GM10248 (cell line): ENCODE measurements at regions of chr1 and their contacts with region 1.

Region 1: DNA sequence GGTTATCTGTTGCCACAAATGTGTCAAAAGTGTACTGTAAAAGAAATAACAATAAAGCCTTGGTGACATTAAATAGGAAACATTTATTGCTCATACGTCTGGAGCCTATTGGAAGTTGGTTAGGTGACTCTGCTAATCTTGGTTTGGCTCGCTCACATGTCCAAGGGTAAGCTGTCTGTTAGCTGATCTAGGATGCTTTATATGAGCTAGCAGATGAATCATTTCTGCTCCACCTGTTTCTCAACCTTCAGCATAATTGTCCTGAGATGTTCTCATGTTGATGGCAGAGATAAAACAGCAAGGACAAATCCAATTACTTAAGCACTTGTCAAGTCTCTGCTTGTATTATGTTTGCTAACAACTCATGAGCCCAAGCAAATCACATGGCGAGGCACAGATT is 56.0 kb upstream of the CD53 start:
- DNase-seq: no peak
- CTCF ChIP-seq: no peak

Region 2: DNA sequence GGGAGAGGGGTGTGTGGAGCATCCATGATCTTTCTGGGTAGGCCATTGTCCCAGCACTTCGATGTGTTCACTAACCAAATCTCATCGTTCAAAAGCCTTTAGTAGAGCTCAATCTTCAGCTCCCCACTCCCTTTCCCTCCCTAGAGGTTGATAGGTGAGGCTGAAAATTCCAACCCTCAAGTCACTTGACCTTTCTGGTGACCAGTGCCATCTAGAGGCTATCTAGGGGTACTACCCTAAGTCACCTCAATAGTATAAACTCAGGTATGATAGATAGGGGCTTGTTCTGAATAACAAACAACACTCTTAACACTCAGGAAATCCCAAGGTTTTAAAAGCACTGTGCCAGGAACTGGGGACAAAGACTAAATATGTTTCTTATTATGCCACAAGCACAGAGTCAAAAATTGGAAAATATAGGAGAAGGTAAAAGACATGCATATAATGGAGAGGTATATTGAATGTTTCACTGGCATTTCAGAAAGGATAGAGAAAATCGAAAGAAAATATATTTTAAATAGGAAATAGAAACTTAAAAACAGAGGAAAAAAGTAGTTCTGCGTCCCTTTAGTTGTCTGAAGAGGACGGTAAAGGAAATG is 13.1 kb after region 1 on chr1:
- CTCF ChIA-PET with region 1: interaction called, 19 read pairs
- POLR2A ChIA-PET with region 1: no interaction called
- DNase-seq: peak; percentile 24
- CTCF ChIP-seq: peak; percentile 66